ENCODE measurements at regions of chr3 and their contacts with region 1.

Region 1: GRCh38 chr3:187295316-187296034 is 3.9 kb upstream of the MASP1 start:
- DNase-seq: no peak
- ATAC-seq: no peak
- H3K4me3 ChIP-seq: no peak overlapping the region
- H3K27ac ChIP-seq: no peak overlapping the region
- H3K4me1 ChIP-seq: no peaks in the 10 kb centered on the region
- H3K27me3 ChIP-seq: peaks cover 3% of the 10 kb centered on the region; the same call in 1 of the 2 replicates
- CTCF ChIP-seq: peak; percentile 34; the same call in 1 of the 2 replicates

Region 2: DNA sequence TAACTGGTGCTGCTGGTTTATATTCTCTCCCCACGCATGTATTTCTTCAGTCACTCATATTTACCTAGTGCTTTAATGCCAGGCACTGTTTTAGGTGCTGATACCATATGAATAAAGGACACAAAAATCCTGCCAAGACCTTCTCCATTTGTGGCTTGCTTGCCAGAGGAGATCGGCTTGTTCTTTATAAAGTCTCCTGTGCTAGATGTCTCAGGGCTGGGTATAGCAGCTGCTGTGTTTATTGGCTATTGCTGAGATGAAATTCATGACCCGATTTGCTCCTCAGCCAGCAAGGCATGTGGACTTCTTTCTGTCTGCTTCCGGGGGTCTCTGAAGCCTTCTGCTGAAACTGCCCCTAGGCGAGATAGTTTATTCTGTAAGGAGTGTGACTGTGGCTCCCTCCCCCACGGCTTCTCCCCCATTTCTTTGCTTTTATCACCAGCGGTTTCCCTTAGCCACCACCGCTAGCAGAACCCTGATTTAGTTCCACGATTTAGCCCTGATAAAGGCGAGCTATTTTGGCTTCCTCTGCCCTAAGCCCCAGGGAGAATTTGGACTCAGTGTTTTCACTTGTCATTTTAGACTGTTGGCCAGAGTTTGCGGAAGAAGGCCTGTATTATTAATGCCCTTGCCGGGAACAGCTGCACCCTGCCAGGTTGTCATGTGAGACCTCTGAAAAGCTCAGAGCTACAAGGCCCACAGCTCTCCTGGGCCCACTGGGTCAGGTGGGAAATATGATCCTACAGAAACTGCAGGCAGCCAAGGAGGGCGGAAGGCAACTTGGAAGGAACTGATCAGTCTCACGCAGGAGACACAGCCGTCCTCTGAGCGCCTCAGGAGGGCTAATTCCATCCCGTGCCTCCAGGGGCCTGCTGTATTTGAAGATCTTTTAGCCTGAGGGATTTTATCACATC is 318.4 kb before region 1 on chr3:
- CTCF ChIA-PET with region 1: no interaction called
- POLR2A ChIA-PET with region 1: no interaction called
- in situ Hi-C with region 1: no loop called
- intact Hi-C with region 1: no loop called
- DNase-seq: no peak
- ATAC-seq: no peak
- H3K4me3 ChIP-seq: no peak overlapping the region
- H3K27ac ChIP-seq: no peak overlapping the region
- H3K4me1 ChIP-seq: no peaks in the 10 kb centered on the region
- H3K27me3 ChIP-seq: no peaks in the 10 kb centered on the region
- CTCF ChIP-seq: no peak

Region 3: DNA sequence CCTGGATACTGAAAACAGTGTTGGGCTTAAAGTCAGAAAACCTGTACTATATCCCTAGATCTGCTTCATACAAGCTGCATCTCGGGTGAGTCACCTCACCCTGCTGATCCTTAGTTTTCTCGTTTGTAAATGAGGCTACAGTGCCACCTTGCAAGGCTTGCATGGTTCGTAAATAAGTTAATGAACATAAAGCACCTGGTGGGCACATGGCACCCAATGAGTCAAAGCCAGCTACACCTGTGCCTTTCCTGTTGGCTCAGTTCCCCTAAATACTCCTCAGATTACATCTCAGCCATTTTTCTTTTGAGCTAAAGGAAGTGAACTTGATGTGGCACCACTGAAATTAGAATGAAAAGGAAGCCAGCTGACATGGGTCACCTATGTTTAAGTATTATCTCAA is 71.7 kb before region 1 on chr3:
- CTCF ChIA-PET with region 1: interaction called, 4 read pairs
- POLR2A ChIA-PET with region 1: no interaction called
- in situ Hi-C with region 1: no loop called
- intact Hi-C with region 1: loop called (anchors 5 kb)
- DNase-seq: no peak
- ATAC-seq: no peak
- H3K4me3 ChIP-seq: no peak overlapping the region
- H3K27ac ChIP-seq: no peak overlapping the region
- H3K4me1 ChIP-seq: no peaks in the 10 kb centered on the region
- H3K27me3 ChIP-seq: no peaks in the 10 kb centered on the region
- CTCF ChIP-seq: no peak

Region 4: GRCh38 chr3:189071441-189071840 is 1776.0 kb after region 1 on chr3:
- CTCF ChIA-PET with region 1: interaction called, 13 read pairs
- POLR2A ChIA-PET with region 1: no interaction called
- in situ Hi-C with region 1: no loop called
- intact Hi-C with region 1: no loop called
- DNase-seq: no peak
- ATAC-seq: no peak
- H3K4me3 ChIP-seq: no peak overlapping the region
- H3K27ac ChIP-seq: no peak overlapping the region
- H3K4me1 ChIP-seq: no peaks in the 10 kb centered on the region
- H3K27me3 ChIP-seq: no peaks in the 10 kb centered on the region
- CTCF ChIP-seq: no peak